ENCODE measurements at regions of chr4 and their contacts with region 1.

Region 1: DNA sequence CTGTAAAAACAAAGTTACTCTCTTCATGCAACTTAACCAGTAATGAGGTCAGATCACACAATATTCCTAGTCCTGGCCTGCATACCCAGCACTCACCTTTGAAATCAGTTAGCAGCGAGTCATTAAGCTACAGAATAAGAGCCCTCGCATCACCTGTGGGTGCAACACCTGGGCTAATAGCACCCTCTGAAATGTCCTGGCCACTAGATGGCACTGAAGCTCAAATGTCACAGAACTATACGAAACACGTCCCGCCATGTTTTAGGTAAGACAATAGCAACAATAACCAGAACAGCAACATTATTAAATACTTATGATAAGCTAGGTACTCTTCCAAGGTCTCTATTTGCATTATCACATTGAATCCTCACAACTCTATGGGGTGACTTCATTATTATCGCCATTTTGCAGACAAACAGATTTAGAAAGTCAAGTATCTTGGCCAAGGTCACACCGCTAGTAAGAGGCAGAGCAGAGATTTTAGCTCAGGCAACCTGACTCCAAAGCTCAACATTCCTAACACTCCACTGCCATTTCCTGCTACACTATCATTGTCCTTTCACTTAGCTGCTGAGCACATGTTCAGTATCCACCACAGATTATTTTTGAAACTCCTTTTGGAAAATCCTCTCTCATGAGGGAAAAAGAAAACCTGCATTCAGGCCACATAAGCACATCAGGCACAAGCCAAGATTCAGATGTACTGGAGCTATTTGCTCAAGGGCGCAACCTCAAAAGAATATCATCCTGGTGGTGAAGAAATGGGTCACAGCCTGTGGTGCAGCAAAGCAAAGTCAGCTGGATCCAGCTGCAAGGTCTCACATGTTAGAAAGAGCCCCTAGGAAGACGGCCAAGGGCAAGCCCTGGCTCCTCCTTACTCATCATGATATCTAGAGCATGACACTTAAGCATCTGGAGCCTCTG is 59.5 kb upstream of the KDR start:
- DNase-seq: no peak
- H3K4me3 Mint-ChIP-seq: no peak overlapping the region
- H3K27ac Mint-ChIP-seq: no peak overlapping the region
- H3K4me1 Mint-ChIP-seq: no peaks in the 10 kb centered on the region
- H3K27me3 Mint-ChIP-seq: peaks cover 3% of the 10 kb centered on the region

Region 2: GRCh38 chr4:55038176-55038890 is 146.5 kb before region 1 on chr4:
- intact Hi-C with region 1: no loop called
- DNase-seq: no peak
- H3K4me3 Mint-ChIP-seq: no peak overlapping the region
- H3K27ac Mint-ChIP-seq: no peak overlapping the region
- H3K4me1 Mint-ChIP-seq: no peaks in the 10 kb centered on the region
- H3K27me3 Mint-ChIP-seq: peaks cover 3% of the 10 kb centered on the region

Region 3: GRCh38 chr4:55103224-55103623 is 81.6 kb before region 1 on chr4:
- intact Hi-C with region 1: no loop called
- DNase-seq: no peak
- H3K4me3 Mint-ChIP-seq: no peak overlapping the region
- H3K27ac Mint-ChIP-seq: no peak overlapping the region
- H3K4me1 Mint-ChIP-seq: no peaks in the 10 kb centered on the region
- H3K27me3 Mint-ChIP-seq: no peaks in the 10 kb centered on the region

Region 4: DNA sequence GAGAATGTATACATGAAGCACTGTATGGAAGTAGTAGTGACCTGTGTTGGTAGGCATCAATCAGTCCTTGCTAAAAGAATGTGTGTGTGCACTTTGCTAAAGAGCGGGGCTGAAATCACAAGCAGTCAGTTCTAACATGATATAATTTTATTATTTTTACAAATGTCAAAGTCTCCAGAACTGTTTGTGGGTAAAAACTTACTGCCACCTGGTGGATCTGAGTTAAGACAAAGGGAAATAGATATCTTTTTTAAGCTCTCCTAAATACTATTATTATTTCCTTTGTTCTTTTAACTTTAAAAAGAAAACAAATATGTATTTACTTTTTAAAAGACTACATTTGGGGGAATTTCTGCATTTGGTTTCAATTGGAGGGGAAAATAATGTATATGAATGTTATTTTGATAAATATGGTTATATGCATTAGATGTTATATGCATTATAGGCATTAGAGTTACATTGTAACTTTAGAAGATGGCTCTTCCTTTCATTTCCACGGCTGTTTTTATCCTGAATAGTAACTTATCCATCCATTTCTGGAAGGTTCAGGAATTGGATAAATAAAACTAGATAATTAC is 369.7 kb after region 1 on chr4:
- intact Hi-C with region 1: loop called (anchors 5 kb)
- DNase-seq: no peak
- H3K4me3 Mint-ChIP-seq: no peak overlapping the region
- H3K27ac Mint-ChIP-seq: no peak overlapping the region
- H3K4me1 Mint-ChIP-seq: peaks cover 11% of the 10 kb centered on the region
- H3K27me3 Mint-ChIP-seq: peaks cover 12% of the 10 kb centered on the region